ENCODE measurements at regions of chr15 and their contacts with region 1.

Region 1: GRCh38 chr15:77496710-77497103 is 76.0 kb downstream of the HMG20A start:
- DNase-seq: peak; percentile 37 to 92
- H3K4me3 ChIP-seq: peak overlapping the region in 1 of 2 donors; percentile 41
- H3K27ac ChIP-seq: peak overlapping the region; percentile 81 to 85
- H3K4me1 ChIP-seq: peaks cover 5 to 27% of the 10 kb centered on the region in 2 donors
- H3K27me3 ChIP-seq: no peaks in the 10 kb centered on the region
- CTCF ChIP-seq: peak; percentile 88 to 96 (median 91)

Region 2: GRCh38 chr15:76931397-76932007 is 565.2 kb before region 1 on chr15 and contains the start of gene RCN2:
- intact Hi-C with region 1: loop called (anchors 5 kb)
- DNase-seq: peak; percentile 68 to 97
- H3K4me3 ChIP-seq: peak within 1 kb of the TSS; percentile 69 to 97
- H3K27ac ChIP-seq: peak within 1 kb of the TSS; percentile 73 to 78
- H3K4me1 ChIP-seq: no peaks in the 10 kb centered on the region
- H3K27me3 ChIP-seq: no peaks in the 10 kb centered on the region
- CTCF ChIP-seq: no peak
- total RNA-seq, gene RCN2: 65.5 TPM

Region 3: DNA sequence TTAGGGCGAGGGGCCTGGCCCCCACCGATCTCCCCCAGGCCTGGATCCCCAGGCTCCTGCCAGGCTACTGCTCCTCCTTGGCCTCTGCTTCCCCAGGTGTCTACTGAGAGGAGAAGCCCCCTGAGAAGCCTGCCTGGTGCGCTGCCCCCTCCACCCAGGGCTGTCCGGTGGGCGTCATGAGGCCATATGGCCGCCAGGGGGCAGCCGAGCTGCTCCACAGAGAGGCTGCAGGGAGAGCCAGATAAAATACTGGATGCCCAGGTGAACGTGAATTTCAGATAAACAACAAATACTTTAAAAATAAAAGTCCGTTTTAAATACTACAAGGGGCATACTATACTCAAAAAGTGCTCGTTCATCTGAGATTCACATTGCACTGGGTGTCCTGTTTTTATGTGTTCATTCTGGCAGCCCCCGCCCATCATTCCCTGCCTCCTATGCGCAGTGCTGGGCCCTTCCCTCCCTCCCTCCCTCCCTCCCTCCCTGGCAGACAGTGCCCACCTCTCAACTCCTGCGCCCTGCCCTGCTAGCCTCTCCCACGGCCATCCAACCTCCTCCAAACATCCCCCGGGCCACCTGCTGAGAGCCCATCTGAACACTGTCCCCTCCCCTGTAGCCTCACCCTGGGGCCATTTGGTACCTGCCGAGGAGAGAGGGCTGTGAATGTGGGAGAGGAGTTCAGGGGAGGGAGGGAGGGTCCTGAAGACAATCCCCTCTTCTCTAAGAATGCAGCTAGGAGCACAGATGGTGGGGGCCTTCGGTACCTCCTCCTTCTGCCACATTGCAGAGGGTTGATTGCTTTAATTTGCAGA is 472.2 kb before region 1 on chr15:
- intact Hi-C with region 1: loop called (anchors 5 kb)
- DNase-seq: peak in 1 of 2 donors; percentile 82
- H3K4me3 ChIP-seq: no peak overlapping the region
- H3K27ac ChIP-seq: no peak overlapping the region
- H3K4me1 ChIP-seq: no peaks in the 10 kb centered on the region
- H3K27me3 ChIP-seq: no peaks in the 10 kb centered on the region
- CTCF ChIP-seq: peak; percentile 90 to 97 (median 97)

Region 4: GRCh38 chr15:77118882-77119321 is 377.8 kb before region 1 on chr15:
- intact Hi-C with region 1: loop called (anchors 1 kb)
- DNase-seq: peak in 1 of 2 donors; percentile 67
- H3K4me3 ChIP-seq: no peak overlapping the region
- H3K27ac ChIP-seq: no peak overlapping the region
- H3K4me1 ChIP-seq: peaks cover 0 to 3% of the 10 kb centered on the region in 2 donors
- H3K27me3 ChIP-seq: no peaks in the 10 kb centered on the region
- CTCF ChIP-seq: peak; percentile 55 to 73 (median 71)

Region 5: DNA sequence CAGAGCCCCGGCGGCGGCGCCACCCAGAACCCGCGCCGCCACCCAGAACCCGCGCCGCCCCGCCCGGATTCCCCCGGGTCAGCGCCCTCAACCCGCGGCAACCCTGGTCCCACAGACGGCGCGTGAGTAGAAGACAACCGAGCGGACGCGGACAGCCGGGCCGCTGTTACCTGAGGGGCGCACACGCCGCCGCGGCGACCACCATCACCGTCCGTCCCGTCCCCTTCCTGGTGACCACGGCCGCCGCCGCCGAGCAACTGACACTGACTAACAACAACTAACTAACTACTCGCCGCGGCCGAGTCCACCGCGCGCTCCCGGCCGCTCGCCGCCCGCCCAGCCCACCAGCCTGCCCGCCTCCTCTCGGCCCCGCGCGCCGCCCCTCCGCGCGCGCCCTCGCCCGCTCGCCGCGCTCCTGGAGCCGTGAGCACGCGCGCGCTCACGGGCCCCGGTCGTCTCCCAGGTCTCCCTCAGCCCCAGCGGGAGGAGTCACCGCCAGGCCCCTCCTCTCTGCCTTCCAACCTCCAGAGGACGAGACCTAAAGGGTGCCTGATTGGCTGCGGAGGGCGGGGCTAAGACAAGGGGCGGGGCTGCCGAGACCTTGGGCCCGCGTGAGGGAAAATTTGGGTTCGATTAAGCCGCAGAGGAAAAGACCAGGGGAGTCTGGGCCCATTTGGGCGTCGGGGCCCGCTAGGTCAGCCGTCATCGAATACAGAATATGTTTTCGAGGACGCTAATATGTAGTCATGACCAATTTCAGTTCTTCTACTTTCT is 76.7 kb before region 1 on chr15 and contains the start of gene PEAK1:
- intact Hi-C with region 1: loop called (anchors 2 kb)
- DNase-seq: peak; percentile 99 to 100
- H3K4me3 ChIP-seq: peak within 1 kb of the TSS; percentile 76 to 99
- H3K27ac ChIP-seq: peak within 1 kb of the TSS; percentile 91 to 97
- H3K4me1 ChIP-seq: peaks cover 0 to 20% of the 10 kb centered on the region in 2 donors
- H3K27me3 ChIP-seq: no peaks in the 10 kb centered on the region
- CTCF ChIP-seq: no peak
- total RNA-seq, gene PEAK1: 53.7 TPM

Region 6: GRCh38 chr15:77455696-77456321 is 40.9 kb before region 1 on chr15:
- intact Hi-C with region 1: loop called (anchors 5 kb)
- DNase-seq: no peak
- H3K4me3 ChIP-seq: no peak overlapping the region
- H3K27ac ChIP-seq: peak overlapping the region; percentile 68 to 77
- H3K4me1 ChIP-seq: peaks cover 0 to 27% of the 10 kb centered on the region in 2 donors
- H3K27me3 ChIP-seq: no peaks in the 10 kb centered on the region
- CTCF ChIP-seq: no peak

Region 7: DNA sequence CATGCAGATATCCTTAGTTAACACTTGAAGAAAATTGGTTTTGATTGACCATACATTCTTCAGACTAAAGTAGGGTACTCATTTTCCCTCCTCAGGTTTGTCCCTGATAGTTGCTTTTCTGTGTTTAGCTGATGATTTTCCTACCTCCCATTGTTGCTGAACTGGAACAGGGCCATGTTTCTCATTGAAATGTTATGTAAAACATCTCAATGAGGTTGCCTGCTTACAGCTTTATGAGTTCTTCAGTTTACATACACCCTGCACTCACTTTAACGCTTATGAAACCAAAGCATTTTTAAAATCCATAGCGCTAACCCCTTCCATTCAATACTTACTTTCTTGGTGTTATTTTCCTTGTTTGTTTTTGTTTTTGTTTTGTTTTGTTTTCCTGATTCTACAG is 14.1 kb before region 1 on chr15:
- intact Hi-C with region 1: no loop called
- DNase-seq: no peak
- H3K4me3 ChIP-seq: no peak overlapping the region
- H3K27ac ChIP-seq: no peak overlapping the region
- H3K4me1 ChIP-seq: peaks cover 3 to 4% of the 10 kb centered on the region in 2 donors
- H3K27me3 ChIP-seq: no peaks in the 10 kb centered on the region
- CTCF ChIP-seq: no peak

Region 8: GRCh38 chr15:77747175-77748077 is 250.7 kb after region 1 on chr15:
- intact Hi-C with region 1: no loop called
- DNase-seq: no peak
- H3K4me3 ChIP-seq: no peak overlapping the region
- H3K27ac ChIP-seq: no peak overlapping the region
- H3K4me1 ChIP-seq: no peaks in the 10 kb centered on the region
- H3K27me3 ChIP-seq: no peaks in the 10 kb centered on the region
- CTCF ChIP-seq: no peak

Measured in ascending aorta (tissue), 2 donors.